Left ventricle myocardium inferior (tissue), 1 donor: ENCODE measurements at regions of chr1 and their contacts with region 1.

Region 1: GRCh38 chr1:27102707-27103491 is 52.0 kb downstream of the SLC9A1 start:
- DNase-seq: peak; percentile 79
- H3K4me3 ChIP-seq: no peak overlapping the region
- H3K27ac ChIP-seq: no peak overlapping the region
- H3K4me1 ChIP-seq: peaks cover 31% of the 10 kb centered on the region
- H3K27me3 ChIP-seq: no peaks in the 10 kb centered on the region
- CTCF ChIP-seq: peak; percentile 99

Region 2: GRCh38 chr1:27045973-27046558 is 56.8 kb before region 1 on chr1:
- intact Hi-C with region 1: no loop called
- DNase-seq: peak; percentile 74
- H3K4me3 ChIP-seq: no peak overlapping the region
- H3K27ac ChIP-seq: no peak overlapping the region
- H3K4me1 ChIP-seq: peaks cover 18% of the 10 kb centered on the region
- H3K27me3 ChIP-seq: no peaks in the 10 kb centered on the region
- CTCF ChIP-seq: peak; percentile 93

Region 3: GRCh38 chr1:27071049-27071416 is 31.9 kb before region 1 on chr1:
- intact Hi-C with region 1: no loop called
- DNase-seq: no peak
- H3K4me3 ChIP-seq: no peak overlapping the region
- H3K27ac ChIP-seq: no peak overlapping the region
- H3K4me1 ChIP-seq: peaks cover 10% of the 10 kb centered on the region
- H3K27me3 ChIP-seq: peaks cover 3% of the 10 kb centered on the region
- CTCF ChIP-seq: no peak

Region 4: DNA sequence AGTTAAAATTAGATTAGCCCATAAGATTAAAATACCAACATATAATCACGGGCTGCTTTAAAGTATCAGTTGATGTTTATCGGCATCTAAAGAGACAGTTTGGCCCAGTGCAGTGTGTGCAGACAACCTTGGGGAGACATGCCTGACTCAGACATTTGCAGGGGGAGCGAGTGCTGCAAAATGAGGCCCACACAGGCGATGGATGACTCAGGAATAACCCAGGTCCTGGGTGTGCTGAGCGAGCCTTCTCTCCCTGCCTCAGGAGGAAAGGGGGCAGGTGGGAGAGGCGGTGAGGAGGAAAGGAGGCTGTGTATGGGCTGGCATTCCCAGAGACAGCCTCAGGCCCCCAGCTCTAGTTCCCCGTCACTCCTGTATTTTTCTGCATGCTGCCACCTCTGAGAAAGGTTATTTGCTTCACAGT is 43.0 kb after region 1 on chr1:
- intact Hi-C with region 1: no loop called
- DNase-seq: no peak
- H3K4me3 ChIP-seq: no peak overlapping the region
- H3K27ac ChIP-seq: peak overlapping the region; percentile 81
- H3K4me1 ChIP-seq: peaks cover 93% of the 10 kb centered on the region
- H3K27me3 ChIP-seq: no peaks in the 10 kb centered on the region
- CTCF ChIP-seq: no peak

Region 5: DNA sequence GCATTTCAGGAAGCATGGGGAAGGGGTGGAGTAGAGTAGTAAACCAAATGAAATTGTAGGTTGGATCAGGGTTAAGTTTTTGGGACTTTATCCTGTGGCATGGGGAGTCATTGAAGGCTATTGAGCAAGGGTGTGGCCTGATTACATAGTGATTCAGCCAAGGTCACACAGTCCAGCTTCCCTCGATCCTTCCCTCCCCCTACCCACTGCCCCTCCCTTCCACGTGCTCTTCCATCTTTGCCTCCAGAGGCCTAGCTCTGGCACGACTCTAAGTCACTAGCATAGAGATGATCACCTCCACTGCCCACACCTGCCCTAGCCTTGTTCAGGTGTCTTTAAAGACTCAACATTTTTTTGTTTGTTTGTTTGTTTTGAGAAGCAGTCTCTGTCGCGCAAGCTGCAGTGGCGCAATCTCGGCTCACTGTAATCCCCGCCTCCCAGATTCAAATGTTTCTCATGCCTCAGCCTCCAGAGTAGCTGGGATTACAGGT is 89.2 kb after region 1 on chr1:
- intact Hi-C with region 1: loop called (anchors 10 kb)
- DNase-seq: no peak
- H3K4me3 ChIP-seq: no peak overlapping the region
- H3K27ac ChIP-seq: no peak overlapping the region
- H3K4me1 ChIP-seq: no peaks in the 10 kb centered on the region
- H3K27me3 ChIP-seq: no peaks in the 10 kb centered on the region
- CTCF ChIP-seq: no peak

Region 6: DNA sequence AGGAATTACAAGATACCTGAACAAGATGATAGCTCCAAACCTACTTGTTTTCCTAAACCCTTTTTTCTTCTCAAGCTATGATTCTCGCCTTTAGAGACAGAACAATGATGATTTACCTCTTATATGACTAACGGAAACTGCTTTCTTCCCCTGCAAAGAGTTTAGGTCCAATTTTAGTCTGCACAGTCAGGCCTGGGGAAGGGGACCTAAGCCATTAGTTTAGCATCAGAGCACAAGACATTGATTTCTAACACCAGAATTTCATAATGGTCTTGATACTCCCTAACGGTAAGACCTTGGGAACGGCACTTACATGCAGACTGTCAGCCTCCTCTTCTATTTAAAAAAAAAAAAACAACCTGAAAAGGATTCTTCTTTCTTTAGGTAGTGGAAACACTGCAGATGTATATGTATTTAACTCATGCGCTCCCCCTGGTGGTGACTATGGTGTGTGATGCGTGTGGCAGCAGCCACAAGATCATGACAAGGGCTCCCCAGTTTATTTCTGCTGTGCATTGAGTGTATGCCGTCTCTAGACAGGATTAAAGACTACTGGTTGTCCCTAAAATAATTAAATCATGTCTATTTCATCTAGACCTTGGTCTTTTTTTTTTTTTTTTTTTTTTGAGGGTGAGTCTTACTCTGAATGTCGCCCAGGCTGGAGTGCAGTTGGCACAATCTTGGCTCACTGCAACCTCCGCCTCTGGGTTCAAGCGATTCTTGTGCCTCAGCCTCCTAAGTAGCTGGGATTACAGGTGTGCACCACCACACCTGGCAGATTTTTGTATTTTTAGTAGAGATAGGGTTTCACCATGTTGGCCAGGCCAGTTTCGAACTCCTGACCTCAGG is 181.8 kb after region 1 on chr1:
- intact Hi-C with region 1: loop called (anchors 5 kb)
- DNase-seq: peak; percentile 72
- H3K4me3 ChIP-seq: no peak overlapping the region
- H3K27ac ChIP-seq: no peak overlapping the region
- H3K4me1 ChIP-seq: no peaks in the 10 kb centered on the region
- H3K27me3 ChIP-seq: no peaks in the 10 kb centered on the region
- CTCF ChIP-seq: peak; percentile 91